HepG2 (cell line): ENCODE measurements at regions of chr19 and their contacts with region 1.

Region 1: GRCh38 chr19:8654591-8655339 is 24.3 kb downstream of the NFILZ start:
- DNase-seq: no peak
- ATAC-seq: peak; percentile 69
- H3K4me3 ChIP-seq: peak overlapping the region; percentile 32 to 65 (median 44); a peak in 3 of 6 replicates
- H3K27ac ChIP-seq: no peak overlapping the region
- H3K4me1 ChIP-seq: 0 out of 2 replicates have a peak, but pooled peaks cover 5% of the 10 kb centered on the region
- H3K27me3 ChIP-seq: peaks cover 0 to 40% of the 10 kb centered on the region in 2 experiments; a peak in 3 of 5 replicates
- CTCF ChIP-seq: peak; percentile 80
- EP300 ChIP-seq: no peak
- POLR2A ChIP-seq: no peak
- RAD21 ChIP-seq: peak; percentile 71

Region 2: DNA sequence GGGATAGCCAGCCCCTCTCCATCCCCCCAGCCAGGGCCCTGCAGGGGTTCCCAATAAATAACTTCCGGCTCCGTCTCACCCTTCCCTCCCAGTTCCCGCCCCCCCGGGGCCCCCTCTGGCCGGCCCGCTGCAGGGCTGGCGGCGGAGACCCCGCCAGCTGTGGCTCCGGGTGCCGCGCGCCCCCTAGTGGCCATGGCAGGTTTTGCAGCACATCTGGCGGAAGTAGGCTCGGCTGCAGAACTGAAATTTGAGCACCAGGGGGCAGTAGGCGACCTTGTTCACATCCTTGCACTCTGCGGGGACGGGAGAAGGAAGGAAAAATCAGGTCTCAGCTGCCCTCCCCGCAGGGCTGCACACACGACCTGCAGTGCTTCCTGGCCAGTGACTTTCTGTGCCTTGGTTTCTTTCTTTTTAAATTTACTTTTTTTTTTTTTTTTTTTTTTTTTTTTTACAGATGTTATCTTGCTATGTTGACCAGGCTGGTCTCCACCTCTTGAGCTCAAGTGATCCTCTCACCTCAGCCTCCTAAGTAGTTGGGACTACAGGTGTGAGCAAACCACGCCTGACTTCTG is 74.0 kb before region 1 on chr19:
- CTCF ChIA-PET with region 1: no interaction called
- POLR2A ChIA-PET with region 1: no interaction called
- in situ Hi-C with region 1: no loop called
- intact Hi-C with region 1: no loop called
- DNase-seq: peak; percentile 63
- ATAC-seq: peak; percentile 71
- H3K4me3 ChIP-seq: no peak overlapping the region; a peak in 1 of 6 replicates
- H3K27ac ChIP-seq: no peak overlapping the region
- H3K4me1 ChIP-seq: peaks cover 40% of the 10 kb centered on the region
- H3K27me3 ChIP-seq: peaks cover 0 to 11% of the 10 kb centered on the region in 2 experiments; a peak in 2 of 5 replicates
- CTCF ChIP-seq: peak; percentile 95
- EP300 ChIP-seq: no peak
- POLR2A ChIP-seq: no peak
- RAD21 ChIP-seq: peak; percentile 92

Region 3: DNA sequence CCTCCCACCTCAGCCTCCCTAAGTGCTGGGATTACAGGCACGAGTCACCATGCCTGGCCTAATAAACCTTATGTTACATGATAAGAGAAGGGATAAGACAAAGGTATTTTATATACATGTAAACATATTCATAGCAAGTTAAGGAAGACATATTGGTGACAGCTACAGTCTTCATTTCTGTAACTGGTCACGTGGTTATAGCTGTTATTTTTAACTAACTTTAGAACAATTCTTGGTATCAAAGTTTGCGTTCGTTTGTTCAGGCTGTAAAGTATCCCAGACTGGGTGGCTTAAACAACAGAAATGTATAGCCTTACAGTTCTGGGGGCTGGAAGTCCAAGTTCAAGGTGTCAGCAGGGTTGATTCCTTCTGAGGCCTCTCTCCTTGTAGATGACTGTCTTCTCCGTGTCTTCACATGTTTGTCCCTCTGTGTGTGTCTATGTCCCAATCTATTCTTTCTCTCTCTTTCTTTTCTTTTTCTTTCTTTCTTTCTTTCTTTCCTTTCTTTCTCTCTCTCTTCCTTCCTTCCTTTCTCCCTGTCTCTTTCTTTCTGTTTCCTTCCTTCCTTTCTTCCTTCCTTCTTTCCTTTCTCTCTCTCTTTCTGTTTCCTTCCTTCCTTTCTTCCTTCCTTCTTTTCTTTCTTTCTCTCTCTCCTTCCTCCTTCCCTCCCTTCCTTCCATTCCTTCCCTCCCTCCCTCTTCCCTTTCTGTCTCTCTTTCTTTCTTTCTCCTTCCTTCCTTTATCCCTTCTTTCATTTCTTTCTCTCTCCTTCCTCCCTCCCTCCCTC is 36.2 kb after region 1 on chr19:
- CTCF ChIA-PET with region 1: interaction called, 26 read pairs
- POLR2A ChIA-PET with region 1: interaction called, 3 read pairs
- in situ Hi-C with region 1: loop called (anchors 5 kb)
- intact Hi-C with region 1: loop called (anchors 1 kb)
- DNase-seq: no peak
- ATAC-seq: no peak
- H3K4me3 ChIP-seq: no peak overlapping the region
- H3K27ac ChIP-seq: no peak overlapping the region
- H3K4me1 ChIP-seq: no peaks in the 10 kb centered on the region
- H3K27me3 ChIP-seq: 0 out of 5 replicates have a peak, but pooled peaks cover 0 to 2% of the 10 kb centered on the region in 2 experiments
- CTCF ChIP-seq: no peak
- EP300 ChIP-seq: no peak
- POLR2A ChIP-seq: no peak
- RAD21 ChIP-seq: no peak

Region 4: GRCh38 chr19:8702350-8702749 is 47.6 kb after region 1 on chr19:
- CTCF ChIA-PET with region 1: no interaction called
- POLR2A ChIA-PET with region 1: no interaction called
- in situ Hi-C with region 1: no loop called
- intact Hi-C with region 1: no loop called
- DNase-seq: no peak
- ATAC-seq: no peak
- H3K4me3 ChIP-seq: no peak overlapping the region
- H3K27ac ChIP-seq: no peak overlapping the region
- H3K4me1 ChIP-seq: no peaks in the 10 kb centered on the region
- H3K27me3 ChIP-seq: no peaks in the 10 kb centered on the region; a peak in 1 of 5 replicates
- CTCF ChIP-seq: no peak
- EP300 ChIP-seq: no peak
- POLR2A ChIP-seq: no peak
- RAD21 ChIP-seq: no peak

Region 5: DNA sequence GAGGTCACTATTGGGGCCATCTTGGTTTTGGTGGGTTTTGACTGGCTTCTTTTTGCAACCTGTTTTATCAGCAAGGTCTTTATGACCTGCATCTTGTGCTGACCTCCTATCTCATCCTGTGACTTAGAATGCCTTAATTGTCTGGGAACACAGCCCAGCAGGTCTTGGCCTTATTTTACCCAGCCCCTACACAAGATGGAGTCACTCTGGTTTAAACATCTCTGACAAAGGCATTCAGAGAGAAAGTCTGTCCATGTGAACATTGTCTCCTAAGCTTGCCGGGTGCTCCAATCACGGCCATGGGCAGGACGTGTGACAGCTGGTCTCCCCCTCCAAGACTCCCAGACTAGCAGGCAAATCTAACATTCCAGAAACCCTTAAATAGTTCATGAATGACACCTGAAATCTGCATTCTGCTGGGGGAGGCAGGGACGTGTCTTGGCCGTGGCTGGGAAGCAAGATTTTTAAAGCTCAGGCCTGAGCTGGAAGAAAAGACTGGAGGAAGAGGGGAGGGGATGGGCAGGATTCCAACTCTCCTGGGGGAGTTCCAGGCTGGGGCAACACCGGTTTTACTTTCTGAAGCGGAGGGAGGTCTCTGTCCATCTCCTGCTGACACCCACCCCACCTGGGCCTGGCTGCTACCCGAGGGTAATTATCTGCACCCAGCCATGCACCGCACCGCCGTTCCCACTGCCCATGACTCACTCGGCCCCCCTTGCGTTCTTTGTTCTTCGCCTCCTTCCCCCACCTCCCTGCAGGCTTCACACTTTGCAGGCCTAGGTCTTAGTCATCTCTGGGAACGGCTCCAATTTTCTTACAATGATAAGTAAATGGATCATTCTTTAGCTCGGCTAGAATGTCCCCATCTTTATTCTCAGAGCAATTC is 420.5 kb after region 1 on chr19:
- CTCF ChIA-PET with region 1: interaction called, 10 read pairs
- POLR2A ChIA-PET with region 1: no interaction called
- in situ Hi-C with region 1: loop called (anchors 25 kb)
- intact Hi-C with region 1: no loop called
- DNase-seq: peak; percentile 65
- ATAC-seq: peak; percentile 65
- H3K4me3 ChIP-seq: no peak overlapping the region
- H3K27ac ChIP-seq: no peak overlapping the region
- H3K4me1 ChIP-seq: 0 out of 2 replicates have a peak, but pooled peaks cover 8% of the 10 kb centered on the region
- H3K27me3 ChIP-seq: no peaks in the 10 kb centered on the region
- CTCF ChIP-seq: no peak
- EP300 ChIP-seq: no peak
- POLR2A ChIP-seq: no peak
- RAD21 ChIP-seq: no peak